ENCODE measurements at regions of chr19 and their contacts with region 1.

Region 1: GRCh38 chr19:49676690-49677231 is 310 bp upstream of the PRMT1 start:
- DNase-seq: peak; percentile 100
- ATAC-seq: peak; percentile 76
- H3K4me3 Mint-ChIP-seq: peak overlapping the region; percentile 98
- H3K27ac Mint-ChIP-seq: peak overlapping the region; percentile 98
- H3K4me1 Mint-ChIP-seq: peaks cover 30% of the 10 kb centered on the region
- H3K27me3 Mint-ChIP-seq: no peaks in the 10 kb centered on the region
- CTCF ChIP-seq: no peak

Region 2: GRCh38 chr19:49502866-49503581 is 173.7 kb before region 1 on chr19:
- CTCF ChIA-PET with region 1: interaction called, 11 read pairs
- POLR2A ChIA-PET with region 1: no interaction called
- intact Hi-C with region 1: no loop called
- DNase-seq: peak; percentile 60
- ATAC-seq: no peak
- H3K4me3 Mint-ChIP-seq: no peak overlapping the region
- H3K27ac Mint-ChIP-seq: no peak overlapping the region
- H3K4me1 Mint-ChIP-seq: peaks cover 41% of the 10 kb centered on the region
- H3K27me3 Mint-ChIP-seq: no peaks in the 10 kb centered on the region
- CTCF ChIP-seq: peak; percentile 48

Region 3: GRCh38 chr19:49590071-49590970 is 86.4 kb before region 1 on chr19:
- CTCF ChIA-PET with region 1: interaction called, 4 read pairs
- POLR2A ChIA-PET with region 1: interaction called, 25 read pairs
- intact Hi-C with region 1: loop called (anchors 5 kb)
- DNase-seq: peak; percentile 99
- ATAC-seq: peak; percentile 77
- H3K4me3 Mint-ChIP-seq: peak overlapping the region; percentile 77
- H3K27ac Mint-ChIP-seq: peak overlapping the region; percentile 92
- H3K4me1 Mint-ChIP-seq: peaks cover 23% of the 10 kb centered on the region
- H3K27me3 Mint-ChIP-seq: no peaks in the 10 kb centered on the region
- CTCF ChIP-seq: peak; percentile 25

Region 4: GRCh38 chr19:49640113-49640898 is 36.5 kb before region 1 on chr19 and contains the start of gene RRAS:
- CTCF ChIA-PET with region 1: interaction called, 12 read pairs
- POLR2A ChIA-PET with region 1: interaction called, 12 read pairs
- intact Hi-C with region 1: loop called (anchors 5 kb)
- DNase-seq: peak; percentile 100
- ATAC-seq: peak; percentile 75
- H3K4me3 Mint-ChIP-seq: peak within 1 kb of the TSS; percentile 92
- H3K27ac Mint-ChIP-seq: peak within 1 kb of the TSS; percentile 99
- H3K4me1 Mint-ChIP-seq: peaks cover 36% of the 10 kb centered on the region
- H3K27me3 Mint-ChIP-seq: no peaks in the 10 kb centered on the region
- CTCF ChIP-seq: no peak
- total RNA-seq, gene RRAS: 6.3 to 7.1 TPM

Region 5: GRCh38 chr19:49665351-49666119 is 11.2 kb before region 1 on chr19 and contains the starts of genes BCL2L12 and IRF3:
- CTCF ChIA-PET with region 1: interaction called, 33 read pairs
- POLR2A ChIA-PET with region 1: interaction called, 47 read pairs
- intact Hi-C with region 1: no loop called
- DNase-seq: peak; percentile 99
- ATAC-seq: peak; percentile 89
- H3K4me3 Mint-ChIP-seq: peak within 1 kb of the TSS; percentile 94
- H3K27ac Mint-ChIP-seq: peak within 1 kb of the TSS; percentile 91
- H3K4me1 Mint-ChIP-seq: peaks cover 28% of the 10 kb centered on the region
- H3K27me3 Mint-ChIP-seq: no peaks in the 10 kb centered on the region
- CTCF ChIP-seq: no peak
- total RNA-seq, gene BCL2L12: 63.4 to 64.6 TPM
- total RNA-seq, gene IRF3: 90.8 to 108 TPM

Region 6: GRCh38 chr19:49690656-49691242 is 14.0 kb after region 1 on chr19 and contains the start of gene CPT1C:
- CTCF ChIA-PET with region 1: interaction called, 19 read pairs
- POLR2A ChIA-PET with region 1: interaction called, 23 read pairs
- intact Hi-C with region 1: no loop called
- DNase-seq: peak; percentile 60
- ATAC-seq: peak; percentile 63
- H3K4me3 Mint-ChIP-seq: peak within 1 kb of the TSS; percentile 60
- H3K27ac Mint-ChIP-seq: no peak within 1 kb of the TSS
- H3K4me1 Mint-ChIP-seq: peaks cover 26% of the 10 kb centered on the region
- H3K27me3 Mint-ChIP-seq: peaks cover 14% of the 10 kb centered on the region
- CTCF ChIP-seq: no peak
- total RNA-seq, gene CPT1C: 0.69 to 1.0 TPM